Naive thymus-derived CD4-positive, alpha-beta T cell (primary cell): ENCODE measurements at regions of chr1 and their contacts with region 1.

Region 1: DNA sequence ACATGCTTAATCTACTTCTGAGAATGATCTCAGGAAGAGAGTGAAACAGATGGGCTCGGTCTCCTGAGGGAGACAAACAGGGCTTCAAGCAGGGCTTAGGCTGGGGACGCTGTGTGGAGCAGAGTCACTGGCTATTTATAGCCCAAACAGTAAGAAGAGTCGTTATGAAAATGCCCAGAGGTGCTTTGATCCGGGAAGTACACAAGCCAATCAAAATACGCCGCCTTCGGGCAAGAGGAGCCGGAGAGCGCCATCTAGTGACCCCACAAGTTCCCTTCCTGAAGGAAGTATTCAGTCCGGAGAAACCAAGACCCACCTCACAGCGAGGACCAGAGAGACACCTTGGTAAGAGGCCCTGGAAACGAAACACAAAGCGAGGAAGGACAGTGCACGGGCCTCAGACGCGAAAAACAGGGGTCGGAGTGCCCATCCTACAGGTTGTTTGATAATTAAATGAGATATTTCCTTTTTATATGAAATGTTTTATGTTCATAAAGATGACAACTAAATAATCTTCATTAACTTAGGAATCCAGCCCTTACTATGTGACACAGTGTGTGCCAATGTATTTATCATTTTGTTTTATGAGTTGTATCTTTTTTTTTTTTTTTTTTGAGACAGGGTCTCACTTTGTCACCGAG is 25.0 kb upstream of the SCCPDH start:
- DNase-seq: peak; percentile 48 to 81 (median 74)
- ATAC-seq: peak; percentile 98
- H3K4me3 ChIP-seq: peak overlapping the region; percentile 26
- H3K4me3 Mint-ChIP-seq: peak overlapping the region; percentile 30 to 76 (median 70)
- H3K27ac ChIP-seq: no peak overlapping the region
- H3K27ac Mint-ChIP-seq: peak overlapping the region in 2 of 9 donors; percentile 13 to 39
- H3K4me1 ChIP-seq: no peaks in the 10 kb centered on the region
- H3K4me1 Mint-ChIP-seq: peaks cover 0 to 11% (median 7%) of the 10 kb centered on the region in 7 donors
- H3K27me3 ChIP-seq: no peaks in the 10 kb centered on the region
- H3K27me3 Mint-ChIP-seq: peaks cover 0 to 10% (median 0%) of the 10 kb centered on the region in 5 donors

Region 2: DNA sequence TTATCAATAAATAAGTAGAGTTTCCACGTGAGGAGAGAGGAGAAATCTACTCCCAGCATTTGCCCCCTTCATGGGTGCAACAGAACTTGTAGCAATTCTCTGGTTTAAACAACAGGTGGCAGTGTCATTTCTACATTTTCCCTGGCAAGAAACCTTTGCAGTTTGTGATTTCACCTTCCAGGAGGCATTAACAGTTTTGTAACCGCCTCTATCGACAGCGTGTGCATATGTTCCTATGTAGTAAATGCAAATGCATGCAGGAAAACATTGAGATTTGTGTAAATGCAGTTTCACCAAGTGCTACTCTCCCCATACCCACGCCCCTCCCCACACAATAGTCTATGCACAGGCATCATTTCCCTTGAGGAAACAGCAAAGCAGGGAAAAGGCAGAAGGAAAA is 686.9 kb before region 1 on chr1:
- CTCF ChIA-PET with region 1: no interaction called
- POLR2A ChIA-PET with region 1: no interaction called
- intact Hi-C with region 1: loop called in 1 of 2 experiments (anchors 1 kb)
- DNase-seq: peak in 5 of 9 donors; percentile 14 to 30 (median 22)
- ATAC-seq: peak; percentile 50
- H3K4me3 ChIP-seq: no peak overlapping the region
- H3K4me3 Mint-ChIP-seq: no peak overlapping the region
- H3K27ac ChIP-seq: no peak overlapping the region
- H3K27ac Mint-ChIP-seq: peak overlapping the region in 2 of 9 donors; percentile 13 to 49
- H3K4me1 ChIP-seq: no peaks in the 10 kb centered on the region
- H3K4me1 Mint-ChIP-seq: peaks cover 0 to 3% (median 0%) of the 10 kb centered on the region in 7 donors
- H3K27me3 ChIP-seq: no peaks in the 10 kb centered on the region
- H3K27me3 Mint-ChIP-seq: no peaks in the 10 kb centered on the region

Region 3: GRCh38 chr1:246632281-246633087 is 66.7 kb before region 1 on chr1:
- CTCF ChIA-PET with region 1: no interaction called
- POLR2A ChIA-PET with region 1: no interaction called
- intact Hi-C with region 1: no loop called
- DNase-seq: no peak
- ATAC-seq: no peak
- H3K4me3 ChIP-seq: no peak overlapping the region
- H3K4me3 Mint-ChIP-seq: no peak overlapping the region
- H3K27ac ChIP-seq: no peak overlapping the region
- H3K27ac Mint-ChIP-seq: peak overlapping the region in 3 of 9 donors; percentile 19 to 43 (median 39)
- H3K4me1 ChIP-seq: no peaks in the 10 kb centered on the region
- H3K4me1 Mint-ChIP-seq: peaks cover 1 to 17% (median 4%) of the 10 kb centered on the region in 7 donors
- H3K27me3 ChIP-seq: no peaks in the 10 kb centered on the region
- H3K27me3 Mint-ChIP-seq: no peaks in the 10 kb centered on the region

Region 4: DNA sequence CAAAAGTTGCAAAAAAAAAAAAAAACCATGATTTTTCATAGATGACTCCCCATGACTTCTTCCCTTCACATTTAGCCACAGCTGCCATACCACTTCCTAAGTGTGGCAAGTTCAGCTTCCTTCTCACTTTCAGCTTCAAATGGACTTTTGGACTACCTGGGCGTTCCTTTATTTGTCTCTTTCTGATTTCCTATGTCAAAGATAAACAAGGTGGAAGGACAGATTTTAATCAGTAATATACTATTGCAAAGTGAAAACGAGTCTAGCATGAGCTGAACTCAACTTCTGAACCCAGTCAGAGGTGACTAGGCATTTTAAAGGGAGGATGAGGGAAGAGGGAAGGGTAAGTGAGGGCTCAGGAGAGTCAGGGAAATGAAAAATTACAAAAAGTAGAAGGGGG is 10.6 kb after region 1 on chr1:
- CTCF ChIA-PET with region 1: no interaction called
- POLR2A ChIA-PET with region 1: no interaction called
- intact Hi-C with region 1: no loop called
- DNase-seq: no peak
- ATAC-seq: no peak
- H3K4me3 ChIP-seq: no peak overlapping the region
- H3K4me3 Mint-ChIP-seq: no peak overlapping the region
- H3K27ac ChIP-seq: no peak overlapping the region
- H3K27ac Mint-ChIP-seq: peak overlapping the region in 1 of 9 donors; percentile 14
- H3K4me1 ChIP-seq: no peaks in the 10 kb centered on the region
- H3K4me1 Mint-ChIP-seq: peaks cover 0 to 9% (median 3%) of the 10 kb centered on the region in 7 donors
- H3K27me3 ChIP-seq: no peaks in the 10 kb centered on the region
- H3K27me3 Mint-ChIP-seq: peaks cover 0 to 14% (median 9%) of the 10 kb centered on the region in 5 donors

Region 5: GRCh38 chr1:246724016-246724730 is 25.0 kb after region 1 on chr1 and contains the start of gene SCCPDH:
- CTCF ChIA-PET with region 1: no interaction called
- POLR2A ChIA-PET with region 1: no interaction called
- intact Hi-C with region 1: loop called (anchors 1 to 2 kb)
- DNase-seq: peak; percentile 21 to 82 (median 50)
- ATAC-seq: peak; percentile 92
- H3K4me3 ChIP-seq: peak within 1 kb of the TSS; percentile 60
- H3K4me3 Mint-ChIP-seq: peak within 1 kb of the TSS; percentile 81 to 92 (median 90)
- H3K27ac ChIP-seq: peak within 1 kb of the TSS; percentile 45
- H3K27ac Mint-ChIP-seq: peak within 1 kb of the TSS; percentile 34 to 75 (median 46)
- H3K4me1 ChIP-seq: no peaks in the 10 kb centered on the region
- H3K4me1 Mint-ChIP-seq: peaks cover 5 to 17% (median 9%) of the 10 kb centered on the region in 7 donors
- H3K27me3 ChIP-seq: no peaks in the 10 kb centered on the region
- H3K27me3 Mint-ChIP-seq: peaks cover 0 to 10% (median 7%) of the 10 kb centered on the region in 5 donors
- total RNA-seq, gene SCCPDH: 3.5 to 14.5 (median 5.3) TPM

Region 6: DNA sequence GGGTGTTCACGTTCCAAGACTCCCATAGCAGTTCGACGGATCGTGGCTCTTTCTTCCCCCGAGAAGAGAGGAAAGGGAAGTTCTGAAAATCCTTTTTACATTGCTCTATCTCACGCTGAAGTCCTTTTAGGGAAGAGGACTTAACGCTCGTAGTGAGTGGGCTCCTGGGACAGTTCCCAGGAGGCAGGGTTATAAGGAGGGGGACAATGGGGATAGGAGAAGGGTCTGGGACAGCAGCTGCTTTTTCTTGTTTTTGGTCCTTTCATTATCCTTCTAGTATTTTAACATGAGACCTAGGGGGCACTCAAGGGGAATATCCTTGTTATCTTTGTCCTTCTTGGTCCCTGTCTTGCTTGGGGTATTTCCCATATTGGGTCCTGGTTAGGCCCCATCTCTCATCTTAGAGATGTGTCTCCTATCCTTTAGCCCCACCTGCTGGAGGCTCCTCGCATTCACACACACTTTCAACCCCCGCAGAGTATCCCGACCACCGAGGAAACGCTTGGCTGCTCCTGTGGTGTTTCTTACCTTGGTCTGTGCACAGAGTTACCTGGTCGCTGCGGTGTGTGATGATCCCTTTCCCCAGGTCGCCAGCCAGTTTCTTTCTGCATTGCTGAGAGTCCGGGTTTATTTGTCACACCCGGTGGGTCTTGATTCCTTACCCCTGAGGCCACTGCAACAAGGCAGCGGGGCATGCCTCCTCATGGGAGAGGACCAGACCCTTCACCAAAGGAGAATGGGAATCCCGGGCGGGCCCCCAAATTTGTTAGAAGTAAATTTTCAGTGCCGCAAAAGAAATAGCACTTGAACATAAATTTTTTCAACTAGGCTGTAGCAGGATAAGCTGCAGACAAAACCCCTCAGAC is 54.7 kb after region 1 on chr1:
- CTCF ChIA-PET with region 1: no interaction called
- POLR2A ChIA-PET with region 1: no interaction called
- intact Hi-C with region 1: loop called (anchors 2 kb)
- DNase-seq: peak; percentile 20 to 55 (median 44)
- ATAC-seq: peak; percentile 81
- H3K4me3 ChIP-seq: no peak overlapping the region
- H3K4me3 Mint-ChIP-seq: no peak overlapping the region
- H3K27ac ChIP-seq: no peak overlapping the region
- H3K27ac Mint-ChIP-seq: no peak overlapping the region
- H3K4me1 ChIP-seq: no peaks in the 10 kb centered on the region
- H3K4me1 Mint-ChIP-seq: no peaks in the 10 kb centered on the region
- H3K27me3 ChIP-seq: no peaks in the 10 kb centered on the region
- H3K27me3 Mint-ChIP-seq: no peaks in the 10 kb centered on the region